ENCODE measurements at regions of chr5 and their contacts with region 1.

Region 1: DNA sequence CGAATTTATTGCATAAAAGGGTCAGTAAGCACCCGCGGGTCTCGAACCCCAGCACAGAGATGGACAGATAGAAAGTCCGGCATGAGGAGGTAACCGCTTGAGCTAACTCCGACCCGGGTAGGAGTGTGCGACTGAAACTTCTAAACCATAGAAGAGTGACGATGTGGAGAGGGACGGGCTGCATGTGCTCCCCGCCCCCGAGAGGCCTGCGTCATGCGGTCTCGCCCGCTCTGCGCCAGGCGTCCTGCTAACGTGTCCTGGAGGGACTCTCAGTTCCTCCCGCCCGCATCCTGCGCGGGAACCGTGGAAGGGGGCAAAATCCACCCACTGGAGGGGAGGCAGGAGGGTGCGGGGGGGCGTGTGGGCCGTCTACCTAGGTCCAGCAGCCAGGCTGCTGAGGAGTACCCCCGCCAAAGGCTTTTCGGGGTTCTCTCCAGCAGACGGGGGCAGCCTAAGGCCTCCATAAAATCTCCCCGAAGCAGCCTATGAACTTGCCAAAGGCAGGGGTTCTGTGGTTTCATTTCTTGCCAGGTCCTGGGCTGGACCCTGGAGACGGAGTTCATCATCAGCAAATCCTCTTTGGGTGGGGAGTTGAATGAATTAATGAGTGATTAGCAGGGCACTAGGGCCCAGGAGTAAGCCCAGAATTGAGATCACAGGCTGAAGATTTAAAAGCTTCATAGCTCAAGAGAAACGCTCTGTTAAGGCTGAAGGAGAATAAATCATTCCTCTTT is 51.9 kb downstream of the TGFBI start:
- DNase-seq: peak; percentile 77
- H3K4me3 ChIP-seq: peak overlapping the region; percentile 60
- CTCF ChIP-seq: no peak

Region 2: DNA sequence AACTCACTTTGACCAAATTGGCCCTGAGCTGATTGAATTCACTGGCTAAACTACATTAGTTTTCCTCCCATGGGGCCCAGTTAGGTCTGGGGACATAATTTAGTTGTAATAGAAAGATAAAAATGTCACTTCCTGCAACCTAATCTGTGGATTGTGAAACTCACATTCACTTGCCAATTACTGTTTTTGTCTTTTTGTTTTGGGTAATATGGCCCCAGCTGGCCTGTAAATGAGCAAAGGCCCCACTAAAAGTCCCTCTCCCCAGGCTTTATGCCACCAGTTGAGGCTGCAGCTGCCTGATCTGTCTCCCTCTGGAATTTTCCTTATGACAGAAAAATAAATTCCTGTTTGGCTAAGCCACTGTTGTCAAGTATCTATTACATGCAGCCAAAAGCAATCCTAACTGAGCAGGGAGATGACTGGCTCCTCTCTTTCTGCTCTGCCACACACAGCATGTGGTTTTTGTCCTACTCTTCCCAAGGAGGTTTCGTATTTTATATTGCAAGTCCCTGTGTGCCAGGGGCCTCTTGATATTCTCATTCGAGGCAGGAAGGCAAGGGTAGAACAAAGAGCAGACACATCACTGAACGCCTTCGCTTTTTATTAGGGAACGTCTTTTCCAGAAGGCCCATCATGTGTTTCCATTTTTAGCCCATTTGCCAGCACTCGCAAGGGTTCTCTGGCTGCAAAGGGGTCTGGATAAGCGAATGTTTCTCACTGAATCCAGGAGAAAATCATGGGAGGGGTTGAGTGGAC is 270.3 kb before region 1 on chr5:
- CTCF ChIA-PET with region 1: no interaction called
- POLR2A ChIA-PET with region 1: no interaction called
- DNase-seq: no peak
- H3K4me3 ChIP-seq: no peak overlapping the region
- CTCF ChIP-seq: no peak

Region 3: DNA sequence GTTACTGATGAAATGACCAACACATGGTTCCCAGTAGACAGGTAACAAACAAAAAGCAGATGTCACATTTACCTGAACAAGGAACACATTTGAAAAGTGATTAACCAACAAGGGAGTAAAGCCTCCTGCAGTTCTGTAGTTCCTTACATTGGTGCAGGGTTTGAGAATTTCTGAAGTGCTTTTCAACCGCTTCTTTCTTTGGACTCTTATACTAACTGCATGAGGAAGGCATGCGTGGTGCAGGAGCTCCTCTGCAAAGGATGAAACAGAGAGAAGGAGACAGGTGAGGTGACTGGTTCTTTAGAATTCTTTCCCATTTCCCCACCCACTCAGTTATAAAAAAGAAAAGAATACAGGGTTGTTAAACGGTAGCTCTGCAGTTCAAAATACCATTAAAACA is 180.4 kb before region 1 on chr5:
- CTCF ChIA-PET with region 1: interaction called, 143 read pairs
- POLR2A ChIA-PET with region 1: no interaction called
- DNase-seq: no peak
- H3K4me3 ChIP-seq: no peak overlapping the region
- CTCF ChIP-seq: no peak

Region 4: GRCh38 chr5:135944967-135945560 is 135.6 kb before region 1 on chr5:
- CTCF ChIA-PET with region 1: interaction called, 71 read pairs
- POLR2A ChIA-PET with region 1: no interaction called
- DNase-seq: peak; percentile 56
- H3K4me3 ChIP-seq: no peak overlapping the region
- CTCF ChIP-seq: peak; percentile 64

Region 5: GRCh38 chr5:136108180-136108611 is 27.5 kb after region 1 on chr5:
- CTCF ChIA-PET with region 1: interaction called, 12 read pairs
- POLR2A ChIA-PET with region 1: no interaction called
- DNase-seq: no peak
- H3K4me3 ChIP-seq: no peak overlapping the region
- CTCF ChIP-seq: no peak

Region 6: DNA sequence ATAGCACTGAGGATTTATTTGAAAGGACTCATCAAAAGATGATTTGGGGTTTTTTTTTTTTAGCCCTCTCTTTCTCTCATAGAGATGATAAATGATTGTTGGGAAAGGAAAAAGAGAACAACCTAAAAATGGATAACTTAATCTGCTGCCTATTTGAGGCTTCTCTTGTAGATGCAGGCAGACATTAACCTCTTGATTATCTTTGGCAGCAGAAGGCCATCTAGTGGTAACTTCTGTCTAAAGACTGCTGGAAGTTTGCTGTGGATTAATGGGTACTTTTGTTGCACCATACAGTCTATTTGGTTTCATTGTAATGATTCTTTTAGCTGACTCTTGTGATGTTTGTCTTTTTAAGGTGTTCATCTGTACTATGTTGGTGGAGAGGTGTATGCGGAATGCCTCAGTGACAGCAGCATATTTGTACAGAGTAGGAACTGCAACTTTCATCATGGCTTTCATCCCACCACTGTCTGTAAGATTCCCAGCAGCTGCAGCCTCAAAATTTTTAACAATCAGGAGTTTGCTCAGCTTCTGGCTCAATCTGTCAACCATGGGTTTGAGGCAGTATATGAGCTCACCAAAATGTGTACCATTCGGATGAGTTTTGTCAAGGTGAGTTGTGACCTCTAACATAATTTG is 93.5 kb after region 1 on chr5:
- CTCF ChIA-PET with region 1: interaction called, 15 read pairs
- POLR2A ChIA-PET with region 1: no interaction called
- DNase-seq: peak; percentile 37
- H3K4me3 ChIP-seq: no peak overlapping the region
- CTCF ChIP-seq: peak; percentile 71

Measured in AG04449 (cell line).